Activated CD4-positive, alpha-beta T cell treated with anti-CD3 and anti-CD28 coated beads for 36 hours (primary cell): ENCODE measurements at regions of chr9 and their contacts with region 1.

Region 1: DNA sequence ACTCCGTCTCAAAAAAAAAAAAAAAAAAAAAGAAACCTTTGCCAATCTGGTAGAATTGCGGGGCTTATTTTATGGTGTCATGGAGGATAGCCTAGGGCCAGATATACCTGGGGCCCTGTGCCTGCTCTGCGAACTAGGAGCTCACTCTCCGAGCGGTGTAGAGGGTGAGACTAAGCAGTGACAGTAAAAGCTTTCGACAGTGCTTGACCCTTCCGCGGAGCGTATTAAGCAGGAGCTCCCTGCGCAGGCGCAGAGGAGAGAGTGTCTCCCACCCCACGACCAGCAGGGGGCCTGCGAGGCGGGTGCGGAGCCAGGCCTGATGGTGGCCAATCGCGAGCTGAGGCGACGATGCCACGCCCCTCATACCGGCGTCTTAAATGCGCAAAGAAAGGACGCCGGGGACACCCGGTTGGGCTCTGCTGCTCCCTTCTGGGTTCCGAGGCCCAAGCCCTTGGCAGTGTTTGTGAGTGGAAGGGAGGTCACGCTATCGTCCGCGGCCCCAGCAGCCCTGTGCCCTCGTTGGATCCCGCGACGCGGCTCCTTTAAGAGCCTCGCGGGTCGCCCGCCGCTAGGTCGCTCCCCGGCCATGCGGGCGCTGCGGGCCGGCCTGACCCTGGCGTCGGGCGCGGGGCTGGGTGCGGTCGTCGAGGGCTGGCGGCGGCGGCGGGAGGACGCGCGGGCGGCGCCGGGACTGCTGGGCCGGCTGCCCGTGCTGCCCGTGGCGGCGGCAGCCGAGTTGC is at the start of gene ENDOG:
- DNase-seq: peak; percentile 98
- ATAC-seq: peak; percentile 98
- H3K4me3 Mint-ChIP-seq: peak within 1 kb of the TSS; percentile 76
- H3K27ac Mint-ChIP-seq: peak within 1 kb of the TSS; percentile 80
- H3K4me1 Mint-ChIP-seq: peaks cover 13% of the 10 kb centered on the region
- H3K27me3 Mint-ChIP-seq: no peaks in the 10 kb centered on the region
- total RNA-seq, gene ENDOG: 7.3 to 9.3 TPM

Region 2: GRCh38 chr9:128249908-128250838 is 568.1 kb before region 1 on chr9:
- CTCF ChIA-PET with region 1: no interaction called
- POLR2A ChIA-PET with region 1: no interaction called
- intact Hi-C with region 1: loop called in 1 of 2 experiments (anchors 1 kb)
- DNase-seq: peak; percentile 99
- ATAC-seq: peak; percentile 98
- H3K4me3 Mint-ChIP-seq: peak overlapping the region; percentile 78
- H3K27ac Mint-ChIP-seq: peak overlapping the region; percentile 42
- H3K4me1 Mint-ChIP-seq: peaks cover 7% of the 10 kb centered on the region
- H3K27me3 Mint-ChIP-seq: peaks cover 10% of the 10 kb centered on the region

Region 3: DNA sequence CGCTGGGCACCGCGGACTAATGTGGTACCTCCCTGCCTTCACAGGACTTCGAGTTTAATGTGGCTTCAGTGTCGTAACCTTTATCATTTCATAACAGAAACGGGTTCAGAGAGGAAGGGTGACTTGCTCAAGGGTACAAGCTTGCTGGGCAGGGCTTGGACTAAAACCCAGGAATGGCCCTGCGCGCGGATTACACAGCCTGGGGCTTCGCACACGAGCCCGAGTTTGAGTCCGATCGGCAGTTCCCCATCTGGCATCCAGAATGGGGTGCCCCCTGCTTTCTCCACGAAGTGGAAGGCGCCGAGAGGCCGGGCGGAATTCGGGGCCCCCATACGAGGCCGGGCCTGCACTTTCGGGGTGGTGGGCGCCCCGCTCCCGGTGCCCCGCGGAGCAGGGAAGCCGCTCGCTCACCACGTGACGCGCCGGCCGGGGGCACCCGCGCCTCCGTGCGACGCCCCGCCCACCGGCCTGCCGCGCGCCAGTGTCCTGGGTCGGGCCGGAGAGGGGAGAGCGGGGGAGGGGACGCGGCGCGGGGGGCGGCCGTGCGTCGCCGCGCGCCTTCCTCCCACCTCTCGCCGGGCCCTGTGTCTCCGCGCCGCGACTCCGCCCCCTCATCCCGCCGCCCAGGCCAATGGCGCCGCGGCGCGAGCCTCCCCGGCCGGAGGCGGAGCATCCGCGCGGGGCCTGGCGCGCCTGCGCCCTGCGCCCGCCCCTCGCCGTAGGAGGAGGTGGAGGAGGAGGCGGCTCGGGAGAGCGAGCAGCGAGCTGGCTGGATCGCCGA is 129.6 kb before region 1 on chr9 and contains the start of gene SET:
- CTCF ChIA-PET with region 1: no interaction called
- POLR2A ChIA-PET with region 1: no interaction called
- intact Hi-C with region 1: loop called (anchors 1 to 5 kb)
- DNase-seq: peak; percentile 96
- ATAC-seq: peak; percentile 71
- H3K4me3 Mint-ChIP-seq: peak within 1 kb of the TSS; percentile 99
- H3K27ac Mint-ChIP-seq: peak within 1 kb of the TSS; percentile 94
- H3K4me1 Mint-ChIP-seq: peaks cover 61% of the 10 kb centered on the region
- H3K27me3 Mint-ChIP-seq: no peaks in the 10 kb centered on the region
- total RNA-seq, gene SET: 673 to 682 TPM

Region 4: GRCh38 chr9:128771745-128772519 is 46.3 kb before region 1 on chr9 and contains the start of gene ZER1:
- CTCF ChIA-PET with region 1: interaction called, 4 read pairs
- POLR2A ChIA-PET with region 1: no interaction called
- intact Hi-C with region 1: loop called (anchors 1 kb)
- DNase-seq: peak; percentile 97
- ATAC-seq: peak; percentile 94
- H3K4me3 Mint-ChIP-seq: peak within 1 kb of the TSS; percentile 82
- H3K27ac Mint-ChIP-seq: peak within 1 kb of the TSS; percentile 86
- H3K4me1 Mint-ChIP-seq: peaks cover 18% of the 10 kb centered on the region
- H3K27me3 Mint-ChIP-seq: no peaks in the 10 kb centered on the region
- total RNA-seq, gene ZER1: 17.1 to 19.3 TPM

Region 5: GRCh38 chr9:128829477-128830251 is 11.4 kb after region 1 on chr9 and contains the start of gene SPOUT1:
- CTCF ChIA-PET with region 1: interaction called, 16 read pairs
- POLR2A ChIA-PET with region 1: interaction called, 7 read pairs
- intact Hi-C with region 1: loop called (anchors 1 kb)
- DNase-seq: peak; percentile 96
- ATAC-seq: peak; percentile 98
- H3K4me3 Mint-ChIP-seq: peak within 1 kb of the TSS; percentile 91
- H3K27ac Mint-ChIP-seq: peak within 1 kb of the TSS; percentile 88
- H3K4me1 Mint-ChIP-seq: peaks cover 23% of the 10 kb centered on the region
- H3K27me3 Mint-ChIP-seq: no peaks in the 10 kb centered on the region
- total RNA-seq, gene SPOUT1: 87.9 to 92.9 TPM

Region 6: GRCh38 chr9:128947422-128948301 is 129.4 kb after region 1 on chr9 and contains the starts of genes DOLK and NUP188:
- CTCF ChIA-PET with region 1: interaction called, 3 read pairs
- POLR2A ChIA-PET with region 1: no interaction called
- intact Hi-C with region 1: loop called in 1 of 2 experiments (anchors 1 kb)
- DNase-seq: peak; percentile 99
- ATAC-seq: peak; percentile 80
- H3K4me3 Mint-ChIP-seq: peak within 1 kb of the TSS; percentile 89
- H3K27ac Mint-ChIP-seq: peak within 1 kb of the TSS; percentile 95
- H3K4me1 Mint-ChIP-seq: peaks cover 29% of the 10 kb centered on the region
- H3K27me3 Mint-ChIP-seq: no peaks in the 10 kb centered on the region
- total RNA-seq, gene DOLK: 4.8 to 5.0 TPM
- total RNA-seq, gene NUP188: 102 to 124 TPM

Region 7: GRCh38 chr9:129080602-129081387 is 262.5 kb after region 1 on chr9 and contains the start of gene DOLPP1:
- CTCF ChIA-PET with region 1: no interaction called
- POLR2A ChIA-PET with region 1: no interaction called
- intact Hi-C with region 1: loop called in 1 of 2 experiments (anchors 1 kb)
- DNase-seq: peak; percentile 99
- ATAC-seq: peak; percentile 98
- H3K4me3 Mint-ChIP-seq: peak within 1 kb of the TSS; percentile 83
- H3K27ac Mint-ChIP-seq: peak within 1 kb of the TSS; percentile 63
- H3K4me1 Mint-ChIP-seq: peaks cover 20% of the 10 kb centered on the region
- H3K27me3 Mint-ChIP-seq: no peaks in the 10 kb centered on the region
- total RNA-seq, gene DOLPP1: 15.1 to 16.4 TPM

Region 8: GRCh38 chr9:129383561-129384416 is 565.5 kb after region 1 on chr9:
- CTCF ChIA-PET with region 1: no interaction called
- POLR2A ChIA-PET with region 1: no interaction called
- intact Hi-C with region 1: no loop called
- DNase-seq: peak; percentile 83
- ATAC-seq: peak; percentile 96
- H3K4me3 Mint-ChIP-seq: peak overlapping the region; percentile 59
- H3K27ac Mint-ChIP-seq: peak overlapping the region; percentile 58
- H3K4me1 Mint-ChIP-seq: peaks cover 8% of the 10 kb centered on the region
- H3K27me3 Mint-ChIP-seq: no peaks in the 10 kb centered on the region